ENCODE measurements at regions of chr9 and their contacts with region 1.

Region 1: DNA sequence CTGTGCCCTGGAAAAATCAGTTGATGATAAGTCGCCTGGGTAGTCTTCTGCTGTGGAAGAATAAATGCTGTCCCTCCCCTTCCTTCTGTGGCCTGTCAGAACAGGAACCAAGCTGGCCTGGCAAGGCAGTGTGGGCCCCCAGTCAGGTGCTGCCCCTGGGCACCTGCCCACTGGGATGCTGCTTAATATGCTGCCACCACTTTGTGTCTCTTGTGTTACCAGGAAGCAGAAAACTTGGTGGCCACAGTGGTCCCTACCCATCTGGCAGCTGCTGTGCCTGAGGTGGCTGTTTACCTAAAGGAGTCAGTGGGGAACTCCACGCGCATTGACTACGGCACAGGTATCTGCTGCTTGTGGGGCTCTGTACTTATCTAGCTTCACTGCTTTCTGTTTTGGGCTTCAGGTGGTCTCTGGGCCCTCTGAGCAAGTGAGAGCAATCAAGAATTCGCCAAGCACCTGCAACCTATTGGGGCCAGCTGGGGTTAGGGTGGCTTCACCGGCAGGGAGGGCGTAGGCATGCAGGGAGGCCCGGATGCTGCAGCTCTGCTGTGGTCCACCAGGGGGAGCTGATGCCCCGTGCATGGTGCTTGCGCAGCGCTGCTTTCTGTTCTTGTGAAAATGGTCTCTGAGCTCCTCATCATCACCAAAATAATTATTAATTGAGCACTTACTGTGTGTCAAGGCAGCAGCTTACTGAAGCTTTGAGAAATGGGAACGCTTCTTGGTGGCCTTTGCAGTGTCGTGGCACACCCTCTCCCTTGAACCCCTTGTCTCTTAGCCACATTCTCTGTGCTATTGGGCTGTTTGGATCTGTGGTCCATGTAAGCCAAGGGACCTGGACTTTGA is 20.3 kb downstream of the PTPA start:
- DNase-seq: peak; percentile 77 to 92 (median 85)
- ATAC-seq: peak; percentile 100
- H3K4me3 ChIP-seq: no peak overlapping the region
- H3K4me3 Mint-ChIP-seq: no peak overlapping the region
- H3K27ac ChIP-seq: peak overlapping the region in 1 of 2 experiments; percentile 1
- H3K27ac Mint-ChIP-seq: peak overlapping the region; percentile 41
- H3K4me1 ChIP-seq: peaks cover 3% of the 10 kb centered on the region
- H3K4me1 Mint-ChIP-seq: peaks cover 5% of the 10 kb centered on the region
- H3K27me3 ChIP-seq: no peaks in the 10 kb centered on the region
- H3K27me3 Mint-ChIP-seq: no peaks in the 10 kb centered on the region
- CTCF ChIP-seq: peak; percentile 96

Region 2: DNA sequence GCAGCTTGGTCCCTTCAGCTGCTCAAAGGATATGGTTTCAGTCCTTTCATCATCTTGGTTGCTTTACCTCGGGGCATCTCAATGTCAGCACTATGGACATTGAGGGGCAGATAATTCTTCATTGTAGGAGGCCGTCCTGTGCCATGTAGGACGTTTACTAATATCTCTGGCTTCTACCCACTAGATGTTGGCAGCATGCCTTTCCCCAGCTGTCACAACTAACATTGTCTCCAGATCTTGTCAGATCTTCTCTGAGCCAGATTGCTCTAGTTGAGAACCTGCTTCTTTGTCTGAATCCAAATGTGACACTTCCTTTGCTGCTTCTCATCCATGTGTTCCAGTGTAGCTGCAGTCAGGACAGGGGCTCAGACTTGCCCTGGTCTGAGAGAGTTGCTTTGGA is 10.0 kb before region 1 on chr9:
- CTCF ChIA-PET with region 1: interaction called, 26 read pairs
- POLR2A ChIA-PET with region 1: no interaction called
- intact Hi-C with region 1: no loop called
- DNase-seq: no peak
- ATAC-seq: no peak
- H3K4me3 ChIP-seq: no peak overlapping the region
- H3K4me3 Mint-ChIP-seq: no peak overlapping the region
- H3K27ac ChIP-seq: no peak overlapping the region
- H3K27ac Mint-ChIP-seq: no peak overlapping the region
- H3K4me1 ChIP-seq: no peaks in the 10 kb centered on the region
- H3K4me1 Mint-ChIP-seq: peaks cover 2% of the 10 kb centered on the region
- H3K27me3 ChIP-seq: no peaks in the 10 kb centered on the region
- H3K27me3 Mint-ChIP-seq: no peaks in the 10 kb centered on the region
- CTCF ChIP-seq: no peak

Region 3: DNA sequence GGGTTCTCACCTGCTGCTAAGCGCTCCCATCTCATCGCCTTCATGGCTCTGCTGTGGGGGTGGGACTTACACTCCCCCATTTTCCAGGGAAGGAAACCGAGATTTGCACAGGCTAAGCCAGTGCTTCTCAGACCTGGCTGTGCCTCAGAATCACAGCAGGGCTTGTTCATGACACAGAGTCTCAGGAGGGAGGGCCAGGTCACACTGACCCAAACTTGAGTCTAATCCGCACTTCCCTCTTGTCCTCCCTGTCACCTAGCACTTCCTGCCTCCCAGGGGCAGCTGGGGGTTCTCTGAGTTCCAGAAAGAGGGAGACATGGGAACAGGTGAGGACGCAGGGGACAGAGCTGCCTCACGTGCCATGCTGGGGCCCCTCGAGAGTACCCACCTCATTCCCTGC is 62.1 kb after region 1 on chr9:
- CTCF ChIA-PET with region 1: no interaction called
- POLR2A ChIA-PET with region 1: no interaction called
- intact Hi-C with region 1: no loop called
- DNase-seq: no peak
- ATAC-seq: no peak
- H3K4me3 ChIP-seq: no peak overlapping the region
- H3K4me3 Mint-ChIP-seq: no peak overlapping the region
- H3K27ac ChIP-seq: no peak overlapping the region
- H3K27ac Mint-ChIP-seq: no peak overlapping the region
- H3K4me1 ChIP-seq: no peaks in the 10 kb centered on the region
- H3K4me1 Mint-ChIP-seq: no peaks in the 10 kb centered on the region
- H3K27me3 ChIP-seq: no peaks in the 10 kb centered on the region
- H3K27me3 Mint-ChIP-seq: peaks cover 2% of the 10 kb centered on the region
- CTCF ChIP-seq: no peak

Measured in CD8-positive, alpha-beta T cell (primary cell).